ENCODE measurements at regions of chr10 and their contacts with region 1.

Region 1: DNA sequence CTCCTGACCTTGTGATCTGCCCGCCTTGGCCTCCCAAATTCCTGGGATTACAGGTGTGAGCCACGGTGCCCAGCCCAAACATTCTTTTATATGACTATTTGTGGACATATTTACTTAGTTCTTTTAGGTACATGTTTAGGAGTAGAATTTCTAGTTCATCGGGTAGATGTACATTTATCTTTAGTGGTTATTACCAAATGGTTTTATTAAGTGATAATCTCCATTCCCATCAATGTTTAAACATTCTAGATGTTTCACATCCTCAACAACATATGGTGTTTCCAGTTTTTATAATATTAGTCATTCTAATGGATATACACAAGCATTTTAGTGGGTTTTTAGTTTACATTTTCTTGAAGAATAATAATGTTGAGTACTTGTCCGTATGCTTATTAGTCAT is 131.7 kb downstream of the RTKN2 start:
- DNase-seq: peak; percentile 100
- ATAC-seq: peak; percentile 85
- H3K4me3 ChIP-seq: no peak overlapping the region
- H3K27ac ChIP-seq: peak overlapping the region; percentile 76
- H3K4me1 ChIP-seq: peaks cover 25% of the 10 kb centered on the region
- H3K27me3 ChIP-seq: no peaks in the 10 kb centered on the region
- CTCF ChIP-seq: no peak

Region 2: DNA sequence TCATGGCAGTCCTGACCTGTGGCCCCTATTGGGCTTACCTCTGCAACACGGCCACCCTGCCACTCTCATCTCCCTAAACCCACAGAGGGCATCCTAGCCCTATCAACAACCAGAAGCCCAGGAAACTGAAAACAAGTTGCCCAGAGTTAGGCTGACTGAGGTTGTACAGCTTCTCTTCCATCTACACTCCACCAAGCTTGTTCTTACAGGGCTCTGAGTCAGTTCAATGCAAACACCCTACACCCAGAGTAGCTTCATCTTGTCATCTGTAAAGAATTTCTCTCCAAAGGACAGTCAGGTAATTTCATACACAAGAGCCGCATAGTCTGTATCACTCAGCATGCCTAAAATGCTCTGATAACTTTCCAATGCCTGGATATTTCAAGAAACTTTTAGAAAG is 60.0 kb before region 1 on chr10:
- CTCF ChIA-PET with region 1: no interaction called
- POLR2A ChIA-PET with region 1: no interaction called
- intact Hi-C with region 1: loop called (anchors 1 kb)
- DNase-seq: peak; percentile 100
- ATAC-seq: peak; percentile 99
- H3K4me3 ChIP-seq: peak overlapping the region; percentile 31
- H3K27ac ChIP-seq: peak overlapping the region; percentile 61
- H3K4me1 ChIP-seq: peaks cover 45% of the 10 kb centered on the region
- H3K27me3 ChIP-seq: no peaks in the 10 kb centered on the region
- CTCF ChIP-seq: peak; percentile 95

Measured in PC-3 (cell line).